ENCODE measurements at regions of chrX and their contacts with region 1.

Region 1: DNA sequence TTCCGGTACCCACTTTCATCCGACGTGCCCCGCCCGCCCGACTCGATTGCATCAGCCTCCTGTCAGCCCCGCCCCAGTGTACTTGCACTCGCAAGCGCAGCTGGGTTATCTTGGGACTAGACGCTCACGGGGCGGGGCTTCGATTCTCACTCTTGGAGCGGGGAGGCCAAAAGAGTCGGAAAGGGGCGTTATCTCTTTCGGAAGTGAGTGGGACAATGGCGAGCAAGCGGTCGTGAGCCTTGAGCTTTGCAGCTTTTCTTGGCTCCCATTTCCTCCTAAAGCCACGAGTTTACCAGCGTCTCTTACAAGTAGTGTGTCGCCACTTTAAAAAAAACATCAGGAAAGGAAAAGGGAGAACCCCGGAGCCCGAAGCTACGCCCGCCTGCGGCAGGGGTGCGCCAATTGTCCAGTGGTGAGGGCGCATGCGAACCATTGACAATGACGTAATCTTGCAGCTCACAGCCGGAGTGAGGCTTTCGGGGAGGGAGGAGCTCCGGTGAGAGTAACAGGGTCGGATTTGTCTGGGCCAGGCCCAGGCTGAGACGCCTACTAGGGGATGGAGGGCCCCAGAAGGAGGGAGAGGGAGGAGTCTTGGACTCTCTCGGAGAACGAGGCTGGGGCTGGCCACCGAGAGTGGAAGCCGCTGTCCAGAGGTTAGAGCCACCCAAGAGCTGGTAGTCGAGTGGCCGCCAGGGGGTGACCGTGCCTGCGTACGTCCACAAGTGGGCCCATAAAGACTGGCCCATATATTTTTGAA is 109.5 kb downstream of the GNL3L start:
- DNase-seq: peak; percentile 96
- ATAC-seq: peak; percentile 98
- H3K4me3 ChIP-seq: peak overlapping the region; percentile 48
- H3K27ac ChIP-seq: peak overlapping the region; percentile 80
- H3K4me1 ChIP-seq: no peaks in the 10 kb centered on the region
- H3K27me3 ChIP-seq: no peaks in the 10 kb centered on the region
- CTCF ChIP-seq: peak; percentile 68
- POLR2A ChIP-seq: peak; percentile 88
- RAD21 ChIP-seq: peak; percentile 61

Region 2: GRCh38 chrX:54920610-54921426 is 281.3 kb after region 1 on chrX and contains the start of gene TRO:
- CTCF ChIA-PET with region 1: no interaction called
- POLR2A ChIA-PET with region 1: no interaction called
- dilution Hi-C with region 1: no loop called
- in situ Hi-C with region 1: no loop called
- intact Hi-C with region 1: loop called (anchors 1 kb)
- DNase-seq: peak; percentile 10
- ATAC-seq: peak; percentile 63
- H3K4me3 ChIP-seq: peak within 1 kb of the TSS; percentile 84
- H3K27ac ChIP-seq: peak within 1 kb of the TSS; percentile 49
- H3K4me1 ChIP-seq: no peaks in the 10 kb centered on the region
- H3K27me3 ChIP-seq: no peaks in the 10 kb centered on the region
- CTCF ChIP-seq: peak; percentile 27; the same call in 1 of the 2 replicates
- POLR2A ChIP-seq: no peak
- RAD21 ChIP-seq: no peak
- total RNA-seq, gene TRO: 25.8 and 35.1 TPM in 2 replicates

Region 3: GRCh38 chrX:54999717-55000598 is 360.4 kb after region 1 on chrX and contains the start of gene APEX2:
- CTCF ChIA-PET with region 1: interaction called, 6 read pairs
- POLR2A ChIA-PET with region 1: interaction called, 6 read pairs
- dilution Hi-C with region 1: no loop called
- in situ Hi-C with region 1: no loop called
- intact Hi-C with region 1: loop called (anchors 1 kb)
- DNase-seq: peak; percentile 91
- ATAC-seq: peak; percentile 97
- H3K4me3 ChIP-seq: peak within 1 kb of the TSS; percentile 94
- H3K27ac ChIP-seq: peak within 1 kb of the TSS; percentile 91
- H3K4me1 ChIP-seq: no peaks in the 10 kb centered on the region
- H3K27me3 ChIP-seq: peaks cover 4% of the 10 kb centered on the region
- CTCF ChIP-seq: no peak
- POLR2A ChIP-seq: peak; percentile 85
- RAD21 ChIP-seq: no peak
- total RNA-seq, gene APEX2: 3.4 and 4.2 TPM in 2 replicates

Region 4: GRCh38 chrX:55874807-55875206 is 1235.3 kb after region 1 on chrX:
- CTCF ChIA-PET with region 1: no interaction called
- POLR2A ChIA-PET with region 1: no interaction called
- dilution Hi-C with region 1: no loop called
- in situ Hi-C with region 1: no loop called
- intact Hi-C with region 1: no loop called
- DNase-seq: no peak
- ATAC-seq: no peak
- H3K4me3 ChIP-seq: no peak overlapping the region
- H3K27ac ChIP-seq: no peak overlapping the region
- H3K4me1 ChIP-seq: no peaks in the 10 kb centered on the region
- H3K27me3 ChIP-seq: no peaks in the 10 kb centered on the region
- CTCF ChIP-seq: no peak
- POLR2A ChIP-seq: no peak
- RAD21 ChIP-seq: no peak

Measured in IMR-90 (cell line).